SK-N-SH (cell line): ENCODE measurements at regions of chr5 and their contacts with region 1.

Region 1: GRCh38 chr5:141040771-141041426 is 10.3 kb upstream of the PCDHB1 start:
- DNase-seq: peak; percentile 87
- H3K4me3 ChIP-seq: peak overlapping the region; percentile 60 to 66
- H3K27ac ChIP-seq: peak overlapping the region; percentile 25 to 90; a peak in 3 of 4 replicates
- H3K4me1 ChIP-seq: peaks cover 0 to 7% of the 10 kb centered on the region in 2 experiments; a peak in 2 of 4 replicates
- H3K27me3 ChIP-seq: no peaks in the 10 kb centered on the region
- CTCF ChIP-seq: peak; percentile 84
- EP300 ChIP-seq: no peak
- RAD21 ChIP-seq: peak; percentile 95

Region 2: GRCh38 chr5:140806834-140807775 is 233.8 kb before region 1 on chr5 and contains the start of gene PCDHA4:
- CTCF ChIA-PET with region 1: interaction called, 51 read pairs
- POLR2A ChIA-PET with region 1: no interaction called
- DNase-seq: peak; percentile 65
- H3K4me3 ChIP-seq: peak within 1 kb of the TSS; percentile 63
- H3K27ac ChIP-seq: peak within 1 kb of the TSS in 1 of 2 experiments; percentile 77; a peak in 2 of 4 replicates
- H3K4me1 ChIP-seq: no peaks in the 10 kb centered on the region; a peak in 2 of 4 replicates
- H3K27me3 ChIP-seq: no peaks in the 10 kb centered on the region
- CTCF ChIP-seq: peak; percentile 63
- EP300 ChIP-seq: no peak
- RAD21 ChIP-seq: peak; percentile 69
- polyA plus RNA-seq, gene PCDHA4: 1.2 and 1.4 TPM in 2 replicates

Region 3: GRCh38 chr5:140862441-140863295 is 178.2 kb before region 1 on chr5:
- CTCF ChIA-PET with region 1: interaction called, 63 read pairs
- POLR2A ChIA-PET with region 1: no interaction called
- DNase-seq: no peak
- H3K4me3 ChIP-seq: no peak overlapping the region; a peak in 1 of 4 replicates
- H3K27ac ChIP-seq: no peak overlapping the region
- H3K4me1 ChIP-seq: no peaks in the 10 kb centered on the region
- H3K27me3 ChIP-seq: no peaks in the 10 kb centered on the region
- CTCF ChIP-seq: no peak
- EP300 ChIP-seq: no peak
- RAD21 ChIP-seq: no peak

Region 4: GRCh38 chr5:140882591-140882899 is 158.4 kb before region 1 on chr5:
- CTCF ChIA-PET with region 1: interaction called, 20 read pairs
- POLR2A ChIA-PET with region 1: no interaction called
- DNase-seq: peak; percentile 43
- H3K4me3 ChIP-seq: no peak overlapping the region
- H3K27ac ChIP-seq: no peak overlapping the region
- H3K4me1 ChIP-seq: no peaks in the 10 kb centered on the region; a peak in 1 of 4 replicates
- H3K27me3 ChIP-seq: no peaks in the 10 kb centered on the region
- CTCF ChIP-seq: no peak; the same call in 1 of the 2 replicates
- EP300 ChIP-seq: no peak
- RAD21 ChIP-seq: peak; percentile 49

Region 5: DNA sequence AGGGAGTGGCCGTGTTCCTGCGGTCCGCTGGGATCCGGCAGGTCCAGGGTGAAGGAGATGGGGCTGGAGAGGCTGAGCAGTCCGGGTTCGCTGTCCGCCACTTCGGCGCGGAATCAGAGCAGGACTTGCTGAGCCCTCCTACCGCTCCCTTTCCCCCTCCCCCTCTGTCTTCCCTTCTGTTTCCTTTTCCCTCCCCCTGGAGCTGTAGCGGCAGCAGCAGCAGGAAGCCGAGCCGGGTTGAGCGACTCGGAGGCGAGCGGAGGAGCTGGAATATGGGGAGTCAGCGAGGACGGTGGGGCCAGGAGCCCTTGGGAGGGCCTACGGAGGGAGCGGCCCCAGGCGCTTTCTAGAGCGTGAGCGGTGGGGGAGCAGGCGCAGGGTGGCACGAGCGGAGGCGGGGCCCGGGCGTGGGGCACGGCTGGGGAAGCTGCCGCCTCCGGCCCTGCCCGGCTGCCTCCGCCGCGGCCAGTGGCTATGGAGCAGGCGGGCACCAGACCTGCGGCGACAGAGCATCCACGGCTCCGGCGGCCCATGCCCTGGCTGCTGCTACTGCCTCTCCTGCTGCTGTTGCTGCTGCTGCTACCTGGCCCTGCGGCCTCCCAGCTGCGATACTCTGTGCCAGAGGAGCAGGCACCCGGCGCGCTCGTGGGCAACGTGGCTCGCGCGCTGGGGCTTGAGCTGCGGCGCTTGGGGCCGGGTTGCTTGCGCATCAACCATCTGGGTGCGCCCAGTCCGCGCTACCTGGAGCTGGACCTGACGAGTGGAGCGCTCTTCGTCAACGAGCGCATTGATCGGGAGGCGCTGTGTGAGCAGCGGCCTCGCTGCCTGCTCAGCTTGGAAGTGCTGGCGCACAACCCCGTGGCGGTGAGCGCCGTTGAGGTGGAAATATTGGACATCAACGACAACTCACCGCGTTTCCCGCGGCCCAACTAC is 74.3 kb before region 1 on chr5 and contains the start of gene PCDHAC2:
- CTCF ChIA-PET with region 1: interaction called, 45 read pairs
- POLR2A ChIA-PET with region 1: interaction called, 26 read pairs
- DNase-seq: peak; percentile 83
- H3K4me3 ChIP-seq: peak within 1 kb of the TSS; percentile 64 to 75
- H3K27ac ChIP-seq: peak within 1 kb of the TSS in 1 of 2 experiments; percentile 94; a peak in 2 of 4 replicates
- H3K4me1 ChIP-seq: peaks cover 8 to 41% of the 10 kb centered on the region in 2 experiments; a peak in 3 of 4 replicates
- H3K27me3 ChIP-seq: no peaks in the 10 kb centered on the region
- CTCF ChIP-seq: no peak
- EP300 ChIP-seq: no peak
- RAD21 ChIP-seq: no peak
- polyA plus RNA-seq, gene PCDHAC2: 0.39 and 0.76 TPM in 2 replicates

Region 6: DNA sequence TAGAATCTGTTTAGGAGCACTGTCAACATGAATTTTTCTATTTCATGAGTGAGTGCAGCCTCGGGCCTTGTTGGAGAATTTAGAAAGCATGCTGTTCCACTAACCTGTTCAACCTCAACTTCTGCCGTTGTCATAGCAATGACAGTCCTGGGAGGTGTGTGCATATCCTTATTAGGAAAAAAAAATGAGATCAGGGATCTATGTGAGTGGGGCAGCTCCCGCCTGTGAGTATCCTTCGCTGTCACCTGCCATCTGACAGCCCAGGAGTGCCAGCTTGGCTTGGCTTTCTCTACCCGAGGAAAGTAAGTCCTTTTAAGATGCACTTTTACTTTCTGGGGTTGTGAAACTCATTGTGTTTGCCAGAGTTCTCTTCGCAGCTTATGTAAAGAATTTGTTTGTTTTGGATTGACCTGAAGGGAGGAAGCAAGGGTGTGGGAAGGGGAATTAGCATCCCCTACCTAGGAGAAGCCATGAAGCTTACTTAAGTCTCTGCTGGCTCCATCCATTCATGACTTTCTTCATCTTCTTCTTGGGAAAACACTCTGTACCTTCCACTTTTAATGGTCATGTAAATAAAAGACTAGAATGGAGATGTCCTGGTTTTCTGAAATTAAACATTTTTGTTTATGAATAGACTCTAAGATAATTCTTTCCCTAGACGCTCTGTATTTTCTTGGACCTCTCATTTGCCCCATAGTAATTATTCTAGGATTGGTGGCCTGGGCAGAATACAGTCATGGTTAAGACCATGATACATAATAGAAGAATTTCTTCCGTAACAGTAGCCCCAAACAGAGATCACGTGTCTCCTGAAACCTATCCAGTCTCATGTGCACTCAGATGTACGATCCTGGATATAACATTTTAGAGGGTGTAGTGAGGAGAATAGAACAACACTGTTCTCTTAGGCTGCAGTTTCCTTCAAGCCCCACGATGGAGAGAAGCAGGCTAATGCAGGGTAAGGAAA is 52.6 kb before region 1 on chr5:
- CTCF ChIA-PET with region 1: interaction called, 13 read pairs
- POLR2A ChIA-PET with region 1: interaction called, 4 read pairs
- DNase-seq: no peak
- H3K4me3 ChIP-seq: no peak overlapping the region
- H3K27ac ChIP-seq: peak overlapping the region in 1 of 2 experiments; percentile 6; a peak in 1 of 4 replicates
- H3K4me1 ChIP-seq: peaks cover 0 to 19% of the 10 kb centered on the region in 2 experiments; a peak in 2 of 4 replicates
- H3K27me3 ChIP-seq: no peaks in the 10 kb centered on the region
- CTCF ChIP-seq: no peak
- EP300 ChIP-seq: no peak
- RAD21 ChIP-seq: no peak